ENCODE measurements at regions of chr18 and their contacts with region 1.

Region 1: DNA sequence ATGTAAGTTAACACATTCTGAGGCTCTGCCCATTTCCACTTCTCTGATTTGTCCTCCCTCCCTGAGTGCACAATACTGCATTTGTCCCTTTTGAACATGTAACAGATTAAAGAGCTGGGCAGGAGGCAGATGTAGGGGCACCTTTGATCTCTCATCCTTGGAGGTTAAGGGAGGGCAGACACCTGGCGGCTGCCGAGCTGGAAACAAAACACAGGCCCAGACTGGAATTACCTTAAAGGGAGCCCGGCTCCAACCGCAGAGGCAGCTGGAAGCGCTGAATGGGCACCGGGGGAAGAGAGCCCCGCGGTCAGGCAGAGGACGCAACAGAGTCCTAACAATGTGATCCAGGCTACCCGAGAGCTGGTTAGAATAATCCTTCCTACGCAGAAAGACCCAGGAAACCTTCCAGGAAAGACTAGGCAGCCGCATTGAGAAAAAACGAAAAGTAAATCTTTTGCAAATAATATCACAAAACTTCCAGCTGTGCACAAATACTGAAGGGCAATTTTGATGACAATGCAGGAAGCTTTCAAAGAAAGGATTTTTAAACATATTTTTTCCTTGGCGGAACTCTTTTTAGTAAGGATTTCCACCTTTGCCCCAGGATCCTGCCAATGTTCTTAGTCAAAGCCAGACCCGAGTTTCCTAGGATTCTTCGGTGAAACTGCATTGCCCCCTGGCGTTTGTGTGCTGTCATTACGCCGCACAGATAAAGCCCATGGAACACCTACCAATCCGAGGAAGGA is 216.0 kb downstream of the TGIF1 start:
- DNase-seq: peak; percentile 79
- H3K4me3 Mint-ChIP-seq: no peak overlapping the region
- H3K27ac Mint-ChIP-seq: no peak overlapping the region
- H3K4me1 Mint-ChIP-seq: peaks cover 31% of the 10 kb centered on the region
- H3K27me3 Mint-ChIP-seq: peaks cover 2% of the 10 kb centered on the region

Region 2: GRCh38 chr18:3269241-3269913 is 396.6 kb before region 1 on chr18:
- CTCF ChIA-PET with region 1: interaction called, 10 read pairs
- DNase-seq: no peak
- H3K4me3 Mint-ChIP-seq: no peak overlapping the region
- H3K27ac Mint-ChIP-seq: no peak overlapping the region
- H3K4me1 Mint-ChIP-seq: peaks cover 70% of the 10 kb centered on the region
- H3K27me3 Mint-ChIP-seq: no peaks in the 10 kb centered on the region

Region 3: GRCh38 chr18:3297025-3297984 is 368.6 kb before region 1 on chr18:
- CTCF ChIA-PET with region 1: interaction called, 37 read pairs
- DNase-seq: peak; percentile 97
- H3K4me3 Mint-ChIP-seq: peak overlapping the region; percentile 93
- H3K27ac Mint-ChIP-seq: peak overlapping the region; percentile 81
- H3K4me1 Mint-ChIP-seq: peaks cover 11% of the 10 kb centered on the region
- H3K27me3 Mint-ChIP-seq: peaks cover 21% of the 10 kb centered on the region

Region 4: GRCh38 chr18:3454365-3455089 is 211.4 kb before region 1 on chr18:
- CTCF ChIA-PET with region 1: interaction called, 49 read pairs
- DNase-seq: peak; percentile 54
- H3K4me3 Mint-ChIP-seq: peak overlapping the region; percentile 88
- H3K27ac Mint-ChIP-seq: peak overlapping the region; percentile 98
- H3K4me1 Mint-ChIP-seq: peaks cover 57% of the 10 kb centered on the region
- H3K27me3 Mint-ChIP-seq: peaks cover 9% of the 10 kb centered on the region

Region 5: DNA sequence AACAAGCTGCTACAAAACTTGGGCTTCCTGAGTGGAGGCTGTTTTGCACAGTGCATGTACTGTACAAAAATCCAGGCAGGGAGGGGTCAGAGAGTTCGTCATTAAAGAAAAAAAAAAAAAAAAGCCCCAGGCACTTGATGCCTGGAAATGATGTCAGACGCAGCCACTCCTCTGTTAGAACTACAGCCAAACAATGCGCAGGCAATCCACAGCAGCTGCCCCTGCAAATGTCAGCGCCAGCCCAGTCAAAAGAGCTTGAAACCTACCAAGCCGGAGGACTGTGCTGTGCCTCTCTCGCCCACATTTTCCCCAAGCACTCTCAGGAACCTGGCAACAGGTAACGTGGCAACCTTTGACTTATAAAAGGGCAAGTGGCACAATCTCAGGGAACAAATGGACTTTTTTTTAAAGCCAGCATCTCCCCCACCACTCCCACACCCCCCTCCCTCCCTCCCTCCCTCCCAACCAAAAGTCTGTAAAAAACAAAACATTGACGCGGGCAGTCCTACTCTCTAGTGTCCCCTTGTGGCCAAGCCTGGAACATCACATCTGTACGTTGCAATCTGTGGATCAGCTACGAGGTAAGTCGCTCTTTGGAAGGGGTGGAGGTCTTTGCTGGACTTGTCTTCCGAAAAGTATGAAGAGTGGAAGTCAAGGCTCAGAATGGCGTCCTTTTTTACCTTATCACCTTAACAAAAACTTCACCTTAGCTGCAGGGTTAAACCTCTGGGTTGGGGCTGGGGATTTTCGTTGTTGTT is 71.9 kb before region 1 on chr18:
- CTCF ChIA-PET with region 1: interaction called, 88 read pairs
- DNase-seq: peak; percentile 92
- H3K4me3 Mint-ChIP-seq: peak overlapping the region; percentile 84
- H3K27ac Mint-ChIP-seq: peak overlapping the region; percentile 99
- H3K4me1 Mint-ChIP-seq: peaks cover 60% of the 10 kb centered on the region
- H3K27me3 Mint-ChIP-seq: no peaks in the 10 kb centered on the region

Region 6: DNA sequence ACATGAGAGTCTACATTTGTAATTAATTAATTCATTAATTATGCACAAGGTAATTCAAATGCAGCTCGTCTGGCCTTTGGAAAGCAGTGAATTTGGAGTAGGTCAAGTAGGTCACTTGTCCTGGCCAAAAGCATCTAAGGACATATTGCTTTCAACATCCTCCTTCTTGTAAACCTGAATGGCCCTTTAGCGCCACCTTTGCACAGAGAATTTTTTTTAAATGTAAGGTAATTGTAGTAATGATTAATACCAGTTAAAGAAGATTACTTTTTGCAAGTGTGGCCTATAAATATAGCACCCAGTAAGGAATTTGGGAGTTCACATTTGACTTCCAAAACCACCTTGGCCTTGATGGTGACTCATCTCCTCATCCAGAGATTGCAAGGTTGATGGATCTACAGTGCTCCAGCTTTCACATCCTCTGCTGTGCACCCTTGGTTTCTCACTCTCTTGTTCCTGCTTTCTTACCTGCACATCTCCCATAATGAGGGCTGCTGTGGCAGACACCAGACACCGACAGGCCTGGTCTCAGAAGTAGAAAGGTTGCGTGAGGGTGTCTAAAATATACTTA is 265.7 kb after region 1 on chr18:
- CTCF ChIA-PET with region 1: no interaction called
- DNase-seq: no peak
- H3K4me3 Mint-ChIP-seq: no peak overlapping the region
- H3K27ac Mint-ChIP-seq: no peak overlapping the region
- H3K4me1 Mint-ChIP-seq: no peaks in the 10 kb centered on the region
- H3K27me3 Mint-ChIP-seq: no peaks in the 10 kb centered on the region